Lower lobe of right lung (tissue), 2 donors: ENCODE measurements at regions of chr4 and their contacts with region 1.

Region 1: DNA sequence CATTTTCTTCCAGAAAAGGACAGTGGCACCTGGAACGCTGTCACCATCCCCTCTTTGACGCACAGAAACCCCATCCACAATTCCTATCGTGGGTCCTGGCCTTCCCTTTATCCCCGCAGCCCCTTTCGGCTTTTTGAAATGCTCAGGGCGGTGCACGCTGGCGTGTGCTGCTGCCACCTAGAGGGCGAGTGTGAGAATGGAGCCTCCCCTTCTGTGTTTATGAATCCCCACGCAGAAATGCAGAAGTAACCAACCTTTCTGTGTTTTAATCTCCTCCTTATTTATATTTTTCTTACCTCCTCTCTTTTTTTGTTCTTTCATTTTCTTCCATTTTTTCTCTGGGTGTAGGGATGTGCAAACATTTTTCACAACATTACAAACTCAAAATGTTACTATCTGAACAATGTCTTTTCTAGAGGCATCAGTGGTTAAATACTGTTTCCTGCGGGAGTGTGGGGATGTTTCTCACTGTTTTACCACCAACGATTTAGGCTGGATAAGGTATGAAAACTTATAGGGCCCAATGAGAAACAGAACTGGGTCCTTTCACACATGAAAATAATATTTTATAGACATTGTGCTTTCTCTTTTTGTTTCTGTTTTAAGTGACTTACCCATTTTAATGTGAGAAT is 50.0 kb downstream of the TMA16 start:
- DNase-seq: peak; percentile 66
- ATAC-seq: peak; percentile 86 to 89
- H3K4me3 ChIP-seq: peak overlapping the region; percentile 27
- H3K27ac ChIP-seq: no peak overlapping the region
- H3K4me1 ChIP-seq: no peaks in the 10 kb centered on the region
- H3K27me3 ChIP-seq: no peaks in the 10 kb centered on the region
- CTCF ChIP-seq: peak; percentile 90

Region 2: GRCh38 chr4:163072222-163072621 is 472.3 kb before region 1 on chr4:
- intact Hi-C with region 1: no loop called
- DNase-seq: no peak
- ATAC-seq: no peak
- H3K4me3 ChIP-seq: no peak overlapping the region
- H3K27ac ChIP-seq: no peak overlapping the region
- H3K4me1 ChIP-seq: no peaks in the 10 kb centered on the region
- H3K27me3 ChIP-seq: no peaks in the 10 kb centered on the region
- CTCF ChIP-seq: no peak

Region 3: DNA sequence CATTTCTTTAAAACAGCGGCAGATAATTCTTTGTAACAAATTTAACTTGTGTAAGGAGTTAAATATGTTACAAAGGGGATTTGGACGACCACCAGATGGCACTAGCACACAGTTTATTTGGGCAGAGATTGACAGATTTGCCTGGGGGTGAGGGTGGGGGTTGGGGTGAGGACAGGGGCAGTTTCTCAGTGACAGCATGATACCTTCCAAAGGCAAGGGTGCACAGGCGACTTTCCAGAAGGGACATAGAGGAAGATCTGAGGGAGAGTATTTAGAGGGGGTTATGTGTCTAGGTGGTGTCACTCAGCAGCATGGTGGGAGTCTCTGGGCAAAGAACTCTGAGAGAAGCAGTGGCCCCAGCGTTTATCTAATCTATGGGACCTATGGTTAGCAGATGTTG is 59.6 kb before region 1 on chr4:
- intact Hi-C with region 1: loop called (anchors 10 kb)
- DNase-seq: no peak
- ATAC-seq: peak; percentile 54 to 64
- H3K4me3 ChIP-seq: no peak overlapping the region
- H3K27ac ChIP-seq: no peak overlapping the region
- H3K4me1 ChIP-seq: no peaks in the 10 kb centered on the region
- H3K27me3 ChIP-seq: no peaks in the 10 kb centered on the region
- CTCF ChIP-seq: peak; percentile 47